Activated CD8-positive, alpha-beta T cell treated with anti-CD3 and anti-CD28 coated beads for 36 hours (primary cell): ENCODE measurements at regions of chr1 and their contacts with region 1.

Region 1: GRCh38 chr1:18564676-18565075 is 66.0 kb upstream of the PAX7 start:
- DNase-seq: no peak
- ATAC-seq: no peak
- H3K4me3 Mint-ChIP-seq: no peak overlapping the region
- H3K27ac Mint-ChIP-seq: no peak overlapping the region
- H3K4me1 Mint-ChIP-seq: no peaks in the 10 kb centered on the region
- H3K27me3 Mint-ChIP-seq: peaks cover 27% of the 10 kb centered on the region
- CTCF ChIP-seq: no peak

Region 2: GRCh38 chr1:18299441-18300338 is 265.0 kb before region 1 on chr1:
- CTCF ChIA-PET with region 1: no interaction called
- POLR2A ChIA-PET with region 1: no interaction called
- intact Hi-C with region 1: no loop called
- DNase-seq: peak; percentile 30
- ATAC-seq: no peak
- H3K4me3 Mint-ChIP-seq: no peak overlapping the region
- H3K27ac Mint-ChIP-seq: no peak overlapping the region
- H3K4me1 Mint-ChIP-seq: no peaks in the 10 kb centered on the region
- H3K27me3 Mint-ChIP-seq: peaks cover 19% of the 10 kb centered on the region
- CTCF ChIP-seq: peak; percentile 82

Region 3: GRCh38 chr1:18575620-18576019 is 10.9 kb after region 1 on chr1:
- CTCF ChIA-PET with region 1: interaction called, 23 read pairs
- POLR2A ChIA-PET with region 1: no interaction called
- intact Hi-C with region 1: no loop called
- DNase-seq: peak; percentile 65
- ATAC-seq: peak; percentile 73
- H3K4me3 Mint-ChIP-seq: no peak overlapping the region
- H3K27ac Mint-ChIP-seq: no peak overlapping the region
- H3K4me1 Mint-ChIP-seq: no peaks in the 10 kb centered on the region
- H3K27me3 Mint-ChIP-seq: peaks cover 2% of the 10 kb centered on the region
- CTCF ChIP-seq: peak; percentile 46

Region 4: GRCh38 chr1:18606443-18607288 is 42.0 kb after region 1 on chr1:
- CTCF ChIA-PET with region 1: no interaction called
- POLR2A ChIA-PET with region 1: no interaction called
- intact Hi-C with region 1: no loop called
- DNase-seq: no peak
- ATAC-seq: no peak
- H3K4me3 Mint-ChIP-seq: no peak overlapping the region
- H3K27ac Mint-ChIP-seq: no peak overlapping the region
- H3K4me1 Mint-ChIP-seq: no peaks in the 10 kb centered on the region
- H3K27me3 Mint-ChIP-seq: no peaks in the 10 kb centered on the region
- CTCF ChIP-seq: no peak